GM10248 (cell line): ENCODE measurements at regions of chr16 and their contacts with region 1.

Region 1: GRCh38 chr16:78122774-78123315 is 23.4 kb downstream of the WWOX start:
- DNase-seq: peak; percentile 47
- CTCF ChIP-seq: peak; percentile 25

Region 2: DNA sequence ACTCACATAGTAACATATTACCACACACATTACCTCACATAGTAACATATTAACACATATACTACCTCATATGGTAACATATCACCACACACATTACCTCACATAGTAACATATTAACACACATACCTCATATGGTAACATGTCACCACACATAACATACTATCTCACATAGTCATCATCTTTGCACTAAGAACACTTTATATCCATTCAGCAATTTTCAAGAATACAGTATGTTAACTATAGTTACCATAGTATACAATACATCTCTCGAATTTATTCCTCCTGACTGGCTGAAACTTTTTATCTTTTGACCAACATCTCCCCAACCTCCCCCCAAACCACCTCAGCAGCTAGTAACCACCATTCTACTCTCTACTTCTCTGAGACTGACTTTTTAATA is 392.9 kb before region 1 on chr16:
- CTCF ChIA-PET with region 1: no interaction called
- POLR2A ChIA-PET with region 1: no interaction called
- DNase-seq: no peak
- CTCF ChIP-seq: no peak

Region 3: GRCh38 chr16:77963185-77964044 is 159.4 kb before region 1 on chr16:
- CTCF ChIA-PET with region 1: no interaction called
- POLR2A ChIA-PET with region 1: no interaction called
- DNase-seq: peak; percentile 39
- CTCF ChIP-seq: no peak

Region 4: GRCh38 chr16:78099372-78100161 is 23.3 kb before region 1 on chr16 and contains the start of gene WWOX:
- CTCF ChIA-PET with region 1: interaction called, 17 read pairs
- POLR2A ChIA-PET with region 1: no interaction called
- DNase-seq: peak; percentile 92
- CTCF ChIP-seq: peak; percentile 89

Region 5: DNA sequence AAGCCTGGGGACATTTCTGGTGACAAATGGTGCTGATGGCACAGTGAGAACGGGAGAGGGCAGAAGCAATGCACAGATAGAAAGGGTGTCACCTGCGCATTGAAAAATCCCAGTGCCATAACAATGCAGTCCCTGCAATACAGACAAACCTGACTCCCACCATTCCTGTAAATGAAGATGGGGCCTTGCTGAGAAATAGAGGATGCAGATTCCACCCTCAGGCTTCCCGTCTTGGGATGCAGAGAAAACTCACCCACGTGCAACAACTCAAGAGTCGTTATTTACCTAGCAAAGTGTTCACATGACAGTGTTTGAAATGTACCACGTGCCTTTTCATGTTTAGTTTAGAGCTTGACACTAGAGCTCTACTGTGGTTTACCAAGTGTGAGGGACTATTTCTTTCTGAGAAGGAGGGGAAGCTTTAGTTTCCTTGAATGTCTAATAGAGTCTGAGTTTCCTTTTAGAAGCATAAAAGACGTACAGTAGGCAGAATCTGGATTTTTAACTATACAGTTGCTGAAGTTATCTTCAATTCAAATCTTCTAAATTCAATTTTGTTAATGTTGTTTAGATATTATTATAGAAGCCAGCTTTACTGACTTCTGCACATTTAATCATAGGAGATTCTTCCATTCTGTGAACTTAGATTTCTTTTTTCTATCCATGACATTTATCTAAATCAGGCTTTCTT is 12.2 kb after region 1 on chr16:
- CTCF ChIA-PET with region 1: interaction called, 10 read pairs
- POLR2A ChIA-PET with region 1: no interaction called
- DNase-seq: no peak
- CTCF ChIP-seq: no peak

Region 6: DNA sequence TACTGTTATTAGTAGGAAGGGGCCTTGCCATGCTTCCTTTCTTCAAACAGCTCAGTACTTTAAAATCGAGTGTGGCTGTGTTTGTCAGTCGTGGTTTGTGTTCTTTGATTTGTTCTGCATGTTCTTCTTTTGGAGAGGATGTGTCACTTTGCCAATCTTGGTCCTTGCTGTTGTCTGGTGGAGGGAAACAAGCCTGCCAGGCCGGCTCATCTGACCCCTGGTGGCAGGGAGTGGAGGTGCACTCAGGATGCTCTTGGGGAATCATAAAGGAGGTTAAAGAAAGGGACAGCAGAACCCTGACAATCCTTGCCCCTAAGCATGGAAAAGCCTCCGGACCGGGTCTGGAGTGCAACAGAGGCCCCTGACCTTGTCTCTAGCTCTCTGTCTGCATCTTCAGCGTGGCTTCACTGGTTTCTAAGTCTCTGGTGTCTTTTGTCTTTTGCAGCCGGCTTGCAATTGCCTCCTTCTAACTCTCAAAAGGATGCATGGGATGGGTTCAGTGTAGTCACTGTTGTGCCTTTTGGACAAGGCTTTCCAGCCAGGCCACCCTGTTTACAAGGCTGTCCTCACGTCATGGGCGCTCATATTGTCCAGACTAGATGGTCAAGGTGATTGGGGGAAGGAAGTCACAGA is 112.4 kb after region 1 on chr16:
- CTCF ChIA-PET with region 1: interaction called, 43 read pairs
- POLR2A ChIA-PET with region 1: no interaction called
- DNase-seq: peak; percentile 75
- CTCF ChIP-seq: peak; percentile 87